ENCODE measurements at regions of chrX and their contacts with region 1.

Region 1: GRCh38 chrX:135185795-135186443 is 14.7 kb upstream of the CT55 start:
- DNase-seq: peak; percentile 75

Region 2: GRCh38 chrX:134949271-134949670 is 236.6 kb before region 1 on chrX:
- CTCF ChIA-PET with region 1: no interaction called
- POLR2A ChIA-PET with region 1: no interaction called
- DNase-seq: no peak

Region 3: GRCh38 chrX:135112096-135112729 is 73.7 kb before region 1 on chrX:
- CTCF ChIA-PET with region 1: interaction called, 11 read pairs
- POLR2A ChIA-PET with region 1: no interaction called
- DNase-seq: peak; percentile 51

Region 4: GRCh38 chrX:135200297-135200696 is 14.4 kb after region 1 on chrX:
- CTCF ChIA-PET with region 1: no interaction called
- POLR2A ChIA-PET with region 1: no interaction called
- DNase-seq: no peak

Region 5: DNA sequence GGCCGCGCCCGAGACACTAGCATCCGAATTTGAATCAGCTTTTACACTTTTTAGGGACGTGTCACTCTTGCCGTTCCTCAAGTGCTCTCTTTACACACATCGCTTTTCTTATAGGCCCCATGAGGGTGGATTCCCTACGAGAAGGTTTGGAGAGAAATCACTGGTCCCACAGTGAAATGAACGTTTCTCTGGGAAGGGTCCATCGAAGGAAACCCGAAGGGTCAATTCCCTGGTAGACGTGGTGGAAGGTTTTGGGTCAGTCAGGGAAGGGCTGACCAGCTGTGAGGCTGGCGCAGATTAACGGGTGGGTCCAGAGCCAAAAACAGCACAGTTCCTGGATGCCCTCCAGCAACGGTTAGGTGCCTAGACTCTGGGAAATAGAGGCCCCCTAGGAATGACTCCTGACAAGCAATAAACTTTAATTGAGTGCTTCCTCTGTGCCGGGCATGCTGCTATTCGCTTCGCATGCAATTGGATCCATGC is 159.2 kb after region 1 on chrX:
- CTCF ChIA-PET with region 1: no interaction called
- POLR2A ChIA-PET with region 1: no interaction called
- DNase-seq: peak; percentile 48

Region 6: DNA sequence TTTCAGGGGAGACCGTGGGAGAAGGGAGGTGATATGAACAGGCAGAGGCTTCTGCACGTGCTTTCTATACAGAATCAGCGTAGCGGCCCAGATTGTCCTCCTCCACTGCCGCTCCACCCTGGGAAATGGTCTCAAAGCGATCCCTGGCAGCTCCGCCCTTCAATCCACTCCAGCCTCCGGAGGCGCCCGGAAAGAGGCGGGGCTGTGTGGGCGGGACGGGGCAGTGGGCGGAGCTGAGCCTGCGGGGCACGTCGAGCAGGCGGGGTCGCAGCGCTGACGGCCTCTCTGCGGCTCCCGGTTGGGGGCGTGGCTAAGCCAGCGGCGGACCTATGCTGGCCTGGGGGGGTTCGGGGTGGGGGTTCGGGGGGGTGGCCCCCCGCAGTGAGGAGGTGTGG is 235.6 kb after region 1 on chrX:
- CTCF ChIA-PET with region 1: no interaction called
- POLR2A ChIA-PET with region 1: no interaction called
- DNase-seq: peak; percentile 95

Measured in HEK293T (cell line).